Activated CD4-positive, alpha-beta T cell treated with anti-CD3 and anti-CD28 coated beads for 36 hours (primary cell): ENCODE measurements at regions of chr4 and their contacts with region 1.

Region 1: DNA sequence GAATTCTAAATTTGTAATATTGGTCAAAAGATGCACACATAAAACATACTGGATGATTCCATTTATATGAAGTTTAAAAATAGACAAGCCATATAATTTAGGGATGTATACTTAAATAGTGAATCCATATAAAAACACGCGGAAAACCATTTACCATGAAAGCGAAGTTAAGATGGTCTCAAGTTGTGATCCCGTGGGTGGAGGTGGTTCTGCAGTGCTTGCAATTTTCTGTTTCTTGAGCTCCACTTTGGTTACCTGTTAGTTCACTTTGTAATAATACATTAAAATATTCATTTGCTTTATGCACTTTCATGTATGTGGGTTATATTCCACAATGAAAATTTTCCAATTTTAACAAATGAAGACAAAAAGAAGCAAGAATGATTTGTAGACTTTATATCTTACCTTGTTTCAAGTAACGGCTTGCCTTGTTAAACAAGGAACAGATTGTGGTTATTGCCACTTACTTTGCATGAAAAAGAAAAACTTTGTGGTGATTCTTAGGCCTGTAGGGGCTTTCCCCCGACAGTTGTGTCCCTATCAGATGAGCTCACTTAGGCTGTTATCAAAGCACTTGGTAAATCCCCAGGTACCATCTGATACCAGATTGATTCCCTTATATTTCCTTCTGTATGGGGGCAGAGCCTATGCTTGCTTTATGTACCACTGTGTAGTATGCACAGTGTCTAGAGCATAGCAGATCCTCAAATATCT is 12.2 kb downstream of the UCP1 start:
- DNase-seq: peak; percentile 37
- ATAC-seq: peak; percentile 99
- H3K4me3 Mint-ChIP-seq: no peak overlapping the region
- H3K27ac Mint-ChIP-seq: no peak overlapping the region
- H3K4me1 Mint-ChIP-seq: peaks cover 18% of the 10 kb centered on the region
- H3K27me3 Mint-ChIP-seq: peaks cover 18% of the 10 kb centered on the region

Region 2: DNA sequence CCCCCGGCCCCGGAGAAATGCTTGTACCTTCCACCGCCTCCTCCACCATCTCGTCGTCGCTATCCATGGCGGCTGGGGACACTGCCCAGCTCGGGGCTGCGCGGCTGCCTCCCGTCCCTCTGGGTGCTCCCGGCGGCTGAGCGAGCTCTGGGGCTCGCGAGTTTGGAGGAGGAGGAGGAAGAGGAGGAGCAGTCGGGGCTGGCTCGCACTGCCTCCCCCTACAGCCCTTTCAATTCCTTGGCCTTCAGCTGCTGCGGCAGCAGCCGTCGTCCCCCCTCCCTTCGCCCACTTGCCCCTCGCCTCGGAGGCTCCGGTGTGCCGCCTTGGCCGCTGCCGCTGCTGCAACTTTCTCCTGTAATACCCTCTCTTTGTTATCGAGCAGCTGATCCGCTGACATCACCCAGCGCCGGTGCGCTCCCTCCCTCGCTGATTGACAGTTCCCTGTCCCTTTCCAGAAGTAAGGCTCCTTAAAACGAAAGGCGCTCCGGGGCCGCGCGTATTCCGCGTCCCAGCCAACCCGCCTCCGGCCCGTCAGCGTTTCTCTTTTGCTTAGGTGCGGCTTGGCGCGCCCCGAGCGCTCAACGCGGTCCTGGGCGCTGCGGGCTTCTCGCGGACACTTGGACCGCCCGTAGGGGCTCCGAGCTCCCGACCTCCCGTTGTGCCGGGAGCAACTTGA is 1000.3 kb before region 1 on chr4 and contains the start of gene SETD7:
- CTCF ChIA-PET with region 1: no interaction called
- POLR2A ChIA-PET with region 1: no interaction called
- intact Hi-C with region 1: no loop called
- DNase-seq: peak; percentile 83
- ATAC-seq: peak; percentile 42
- H3K4me3 Mint-ChIP-seq: peak within 1 kb of the TSS; percentile 96
- H3K27ac Mint-ChIP-seq: peak within 1 kb of the TSS; percentile 91
- H3K4me1 Mint-ChIP-seq: peaks cover 55% of the 10 kb centered on the region
- H3K27me3 Mint-ChIP-seq: no peaks in the 10 kb centered on the region
- total RNA-seq, gene SETD7: 12.4 to 12.5 TPM

Region 3: GRCh38 chr4:140071806-140072205 is 484.7 kb before region 1 on chr4:
- CTCF ChIA-PET with region 1: no interaction called
- POLR2A ChIA-PET with region 1: no interaction called
- intact Hi-C with region 1: loop called in 1 of 2 experiments (anchors 5 kb)
- DNase-seq: peak; percentile 85
- ATAC-seq: peak; percentile 85
- H3K4me3 Mint-ChIP-seq: peak overlapping the region; percentile 29
- H3K27ac Mint-ChIP-seq: peak overlapping the region; percentile 56
- H3K4me1 Mint-ChIP-seq: peaks cover 44% of the 10 kb centered on the region
- H3K27me3 Mint-ChIP-seq: peaks cover 15% of the 10 kb centered on the region

Region 4: GRCh38 chr4:140568507-140569306 is 12.2 kb after region 1 on chr4 and contains the start of gene UCP1:
- CTCF ChIA-PET with region 1: no interaction called
- POLR2A ChIA-PET with region 1: no interaction called
- intact Hi-C with region 1: loop called in 1 of 2 experiments (anchors 1 kb)
- DNase-seq: peak; percentile 10
- ATAC-seq: no peak
- H3K4me3 Mint-ChIP-seq: peak within 1 kb of the TSS; percentile 54
- H3K27ac Mint-ChIP-seq: no peak within 1 kb of the TSS
- H3K4me1 Mint-ChIP-seq: peaks cover 19% of the 10 kb centered on the region
- H3K27me3 Mint-ChIP-seq: peaks cover 52% of the 10 kb centered on the region
- total RNA-seq, gene UCP1: not detected